Posterior vena cava (tissue), 2 donors: ENCODE measurements at regions of chr10 and their contacts with region 1.

Region 1: DNA sequence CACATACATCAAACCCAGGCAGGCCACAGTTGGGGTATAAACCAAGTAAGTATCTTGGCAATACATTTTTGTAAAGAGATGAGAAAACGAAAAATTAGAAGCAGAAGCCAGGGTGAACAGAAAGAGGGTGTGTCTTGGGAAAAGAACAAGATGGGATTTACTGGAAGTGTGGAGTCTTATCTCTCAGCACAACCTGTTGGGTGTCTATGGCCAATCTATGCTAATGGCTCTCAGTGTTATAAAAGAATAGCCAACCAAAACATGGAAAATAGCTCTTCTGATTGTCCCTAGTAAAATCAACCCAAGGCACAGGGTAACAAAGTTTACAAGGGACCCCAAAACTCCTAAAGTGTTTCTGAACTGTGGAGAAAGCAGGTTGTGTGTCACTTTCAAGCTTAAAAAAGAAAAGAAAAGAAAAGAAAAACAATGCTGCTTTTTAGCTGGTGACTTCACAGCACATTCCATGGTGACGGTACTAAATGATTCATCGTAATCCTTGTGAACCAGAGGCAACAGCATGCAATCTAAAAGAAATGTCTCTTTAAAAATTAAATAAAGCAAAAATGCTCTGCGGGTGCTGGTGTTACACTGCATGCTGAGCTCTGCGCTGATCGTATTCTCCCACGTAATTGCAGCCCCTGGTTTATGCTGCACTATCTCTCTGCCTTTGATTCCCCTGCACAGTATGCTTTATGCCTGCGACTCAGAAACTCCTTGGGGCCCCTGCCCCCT is 100.8 kb downstream of the C10orf90 start:
- DNase-seq: no peak

Region 2: GRCh38 chr10:126586128-126586527 is 16.4 kb after region 1 on chr10:
- intact Hi-C with region 1: no loop called
- DNase-seq: no peak

Region 3: GRCh38 chr10:127899766-127900387 is 1330.2 kb after region 1 on chr10:
- intact Hi-C with region 1: loop called in 1 of 2 experiments (anchors 5 kb)
- DNase-seq: no peak

Region 4: DNA sequence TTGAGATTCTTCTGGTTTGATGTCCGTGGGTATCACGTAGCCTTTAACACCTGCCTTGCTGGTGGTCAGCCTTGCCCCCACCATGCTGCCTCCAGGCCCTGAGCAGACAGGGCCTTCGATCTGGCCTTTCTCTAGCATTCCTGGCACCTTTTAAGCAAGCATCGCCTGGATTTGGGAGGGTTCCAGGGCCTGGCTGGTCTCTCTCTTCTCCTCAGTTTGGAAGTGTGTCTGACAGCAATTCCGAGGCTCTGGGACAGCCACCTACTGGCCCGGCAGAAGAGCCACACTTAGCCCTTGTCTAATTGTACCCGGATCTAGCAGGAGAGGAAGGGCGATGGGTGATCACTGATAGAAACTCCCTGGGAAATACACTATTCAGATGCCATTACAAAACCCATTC is 1997.9 kb after region 1 on chr10:
- intact Hi-C with region 1: no loop called
- DNase-seq: no peak